ENCODE measurements at regions of chr15 and their contacts with region 1.

Region 1: DNA sequence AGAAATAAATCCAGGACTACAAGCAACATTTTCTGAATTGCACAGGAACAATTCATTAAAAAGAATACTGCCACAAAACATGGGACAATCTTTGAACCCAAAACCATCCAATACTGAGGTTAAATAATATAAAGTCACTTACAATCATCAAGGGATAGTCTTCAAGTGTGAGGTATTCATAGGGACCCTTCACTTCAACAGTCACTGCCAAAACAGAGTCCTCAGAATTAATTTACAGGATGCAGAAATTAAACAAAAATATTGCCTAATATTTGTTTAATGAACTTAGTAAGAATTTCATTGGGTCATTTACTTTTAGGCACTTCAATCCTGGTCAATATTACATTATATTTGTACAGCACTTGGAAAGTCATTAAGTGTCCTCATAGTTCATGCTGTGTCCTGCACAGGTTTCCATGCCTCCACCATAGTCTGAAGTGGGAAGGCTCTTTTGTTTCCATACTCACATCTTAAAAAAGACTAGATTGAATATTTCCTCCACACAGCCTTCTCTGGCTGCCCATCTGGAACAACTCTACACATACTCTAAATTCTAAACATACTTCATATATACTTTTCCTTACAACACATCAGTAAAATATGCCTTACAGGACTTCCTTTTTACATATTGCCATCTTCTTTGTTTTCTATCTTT is 31.6 kb upstream of the VPS39 start:
- DNase-seq: no peak
- H3K4me3 ChIP-seq: no peak overlapping the region
- H3K27ac ChIP-seq: no peak overlapping the region
- H3K4me1 ChIP-seq: no peaks in the 10 kb centered on the region
- H3K27me3 ChIP-seq: no peaks in the 10 kb centered on the region
- CTCF ChIP-seq: no peak
- POLR2A ChIP-seq: no peak

Region 2: DNA sequence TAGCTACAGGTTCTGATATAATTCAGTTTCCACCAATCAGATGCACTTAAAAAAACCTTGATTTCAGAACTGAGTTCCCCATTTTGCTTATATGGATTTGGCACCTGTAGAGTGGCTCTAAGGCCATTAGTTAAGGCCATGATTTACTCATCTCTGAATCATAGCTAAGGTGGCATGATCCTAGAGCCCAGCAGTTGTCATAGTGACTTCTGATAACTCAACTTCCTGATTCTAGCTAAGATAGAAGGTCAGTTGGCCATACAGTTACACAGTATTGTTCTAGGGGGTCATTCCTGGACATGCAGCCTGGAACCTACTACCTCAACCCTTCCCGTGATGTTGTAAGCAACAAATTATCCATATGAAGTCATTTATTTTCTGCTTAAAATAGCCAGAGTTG is 49.5 kb after region 1 on chr15:
- intact Hi-C with region 1: loop called (anchors 2 kb)
- DNase-seq: no peak
- H3K4me3 ChIP-seq: no peak overlapping the region
- H3K27ac ChIP-seq: no peak overlapping the region
- H3K4me1 ChIP-seq: no peaks in the 10 kb centered on the region
- H3K27me3 ChIP-seq: no peaks in the 10 kb centered on the region
- CTCF ChIP-seq: no peak
- POLR2A ChIP-seq: no peak